Mucosa of descending colon (tissue), 3 donors: ENCODE measurements at regions of chr3 and their contacts with region 1.

Region 1: GRCh38 chr3:157081681-157082210 is 78.2 kb downstream of the CCNL1 start:
- DNase-seq: peak; percentile 90 to 92 (median 91)
- ATAC-seq: peak; percentile 98
- H3K4me3 ChIP-seq: no peak overlapping the region
- H3K4me1 ChIP-seq: peaks cover 4% of the 10 kb centered on the region
- CTCF ChIP-seq: peak; percentile 96

Region 2: GRCh38 chr3:156674046-156674910 is 407.5 kb before region 1 on chr3 and contains the start of gene TIPARP:
- intact Hi-C with region 1: loop called (anchors 5 kb)
- DNase-seq: peak; percentile 100
- ATAC-seq: peak; percentile 93
- H3K4me3 ChIP-seq: peak within 1 kb of the TSS; percentile 86
- H3K4me1 ChIP-seq: peaks cover 25% of the 10 kb centered on the region
- CTCF ChIP-seq: peak; percentile 86
- total RNA-seq, gene TIPARP: 26.4 to 28.6 (median 26.7) TPM

Region 3: DNA sequence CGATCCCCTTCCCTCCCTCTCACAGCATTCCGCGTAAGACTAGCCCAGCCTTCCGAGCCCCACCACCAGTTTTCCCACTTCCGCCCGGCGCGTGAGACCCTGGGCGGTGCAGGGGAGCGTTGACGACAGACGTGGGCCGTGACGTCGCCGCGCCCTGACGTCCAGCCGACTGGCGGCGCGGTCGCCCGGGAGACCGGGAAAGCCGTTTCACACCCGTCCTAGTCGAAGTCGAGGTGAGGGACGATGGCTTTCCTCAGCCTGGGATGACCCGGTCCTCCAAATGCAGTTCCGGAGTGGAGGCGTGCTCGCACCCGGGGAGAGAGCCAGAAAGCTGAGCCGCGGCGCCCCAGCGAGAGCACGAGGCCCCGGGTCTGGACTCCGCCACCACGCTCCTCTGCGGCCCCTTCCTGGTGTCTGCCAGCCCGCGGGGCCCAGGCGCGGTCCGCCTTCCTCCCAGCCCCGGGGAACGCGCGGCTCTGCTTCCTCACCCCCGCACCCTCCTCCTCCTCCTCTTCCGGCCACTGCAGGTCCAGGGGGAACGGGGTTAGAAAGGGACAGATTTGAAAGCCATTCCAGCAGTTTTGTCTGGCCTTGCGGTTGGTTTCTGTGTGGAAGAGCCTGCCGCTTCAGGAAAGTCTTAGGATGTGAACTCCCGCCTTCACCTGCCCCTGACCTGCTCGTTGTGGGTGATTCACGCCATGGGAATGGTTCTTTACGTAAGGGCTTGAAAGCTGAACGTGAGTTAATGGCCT is 255.4 kb before region 1 on chr3 and contains the start of gene LEKR1:
- intact Hi-C with region 1: loop called in 1 of 2 experiments (anchors 10 kb)
- DNase-seq: peak; percentile 93
- ATAC-seq: peak; percentile 91
- H3K4me3 ChIP-seq: peak within 1 kb of the TSS; percentile 43
- H3K4me1 ChIP-seq: no peaks in the 10 kb centered on the region
- CTCF ChIP-seq: no peak
- total RNA-seq, gene LEKR1: 1.9 to 3.5 (median 1.9) TPM